Colonic mucosa (tissue), 4 donors: ENCODE measurements at regions of chr13 and their contacts with region 1.

Region 1: DNA sequence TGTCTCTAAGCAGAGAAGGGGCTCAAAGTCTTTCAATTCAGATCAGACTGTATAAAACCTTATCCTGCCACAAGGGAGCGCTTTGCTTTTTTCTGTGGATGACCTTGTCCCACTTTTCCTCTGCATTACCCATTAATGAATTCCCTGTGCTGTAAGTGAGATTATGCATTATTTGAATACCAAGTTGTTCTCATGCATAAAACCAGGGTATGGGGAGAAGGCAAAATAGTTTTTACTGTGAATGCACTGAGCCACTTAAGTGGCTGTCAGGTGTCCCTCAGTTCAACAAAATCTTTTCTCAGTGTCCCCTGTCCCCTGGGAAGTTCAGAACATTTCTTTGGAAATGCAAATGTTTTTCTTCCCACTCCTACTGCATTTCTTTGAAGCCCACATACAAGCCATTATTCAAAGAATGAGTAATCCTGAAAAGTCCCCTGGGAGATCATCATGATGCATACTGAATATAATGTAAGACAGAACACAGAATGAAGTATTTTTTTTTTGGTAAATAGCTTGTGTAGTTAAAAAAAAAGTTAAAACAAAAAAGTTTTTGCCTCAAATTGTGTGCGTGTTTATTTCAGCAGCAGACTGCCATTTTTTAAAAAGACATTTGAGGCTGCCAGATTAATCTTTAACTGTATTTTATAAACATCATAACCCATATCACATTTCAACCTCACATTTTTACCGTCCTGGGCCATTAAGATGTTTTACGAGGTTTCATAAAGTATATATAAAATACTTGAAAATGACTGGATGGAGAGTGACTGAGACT is 506.7 kb upstream of the PCDH9 start:
- DNase-seq: peak; percentile 21
- H3K4me3 ChIP-seq: no peak overlapping the region
- H3K27ac ChIP-seq: no peak overlapping the region
- H3K4me1 ChIP-seq: no peaks in the 10 kb centered on the region
- H3K27me3 ChIP-seq: no peaks in the 10 kb centered on the region
- CTCF ChIP-seq: peak; percentile 16

Region 2: GRCh38 chr13:68234274-68234673 is 497.4 kb after region 1 on chr13:
- intact Hi-C with region 1: loop called (anchors 10 kb)
- DNase-seq: no peak
- H3K4me3 ChIP-seq: no peak overlapping the region
- H3K27ac ChIP-seq: no peak overlapping the region
- H3K4me1 ChIP-seq: no peaks in the 10 kb centered on the region
- H3K27me3 ChIP-seq: no peaks in the 10 kb centered on the region
- CTCF ChIP-seq: no peak

Region 3: DNA sequence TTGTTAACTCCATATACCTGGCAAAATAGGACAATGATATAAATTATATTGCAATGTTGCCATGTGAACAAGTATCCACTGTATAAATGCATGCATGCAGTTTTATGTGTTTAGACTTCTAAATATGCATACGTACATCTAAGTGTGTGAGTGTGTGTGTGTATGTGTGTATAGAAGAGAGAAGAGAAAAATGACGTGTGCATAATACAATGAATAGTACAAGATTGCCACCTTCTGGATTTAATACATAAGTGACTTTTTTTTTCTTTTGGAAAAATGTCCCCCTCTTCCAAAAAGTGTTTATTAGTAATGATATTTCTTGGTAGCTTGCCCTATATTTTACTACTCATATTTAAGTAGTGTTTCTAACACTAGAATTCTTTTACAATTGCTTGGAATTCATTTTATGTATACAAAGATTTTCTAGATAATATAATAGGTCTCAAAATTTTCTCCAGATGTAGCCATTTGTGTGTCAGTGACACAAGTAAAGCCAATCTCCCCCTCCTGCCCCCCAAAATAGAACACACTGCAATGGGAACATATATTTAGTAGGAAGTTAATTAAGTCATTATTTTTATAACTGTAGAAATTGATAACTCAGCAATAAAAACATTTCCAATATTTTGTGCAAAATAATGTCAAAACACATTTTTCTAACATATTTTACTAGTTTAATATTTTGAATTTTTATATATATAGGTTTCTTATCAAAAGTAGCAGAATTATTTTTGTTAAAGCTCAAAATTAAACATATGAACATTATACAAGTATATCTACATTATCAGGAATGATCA is 1587.5 kb after region 1 on chr13:
- intact Hi-C with region 1: loop called (anchors 10 kb)
- DNase-seq: no peak
- H3K4me3 ChIP-seq: no peak overlapping the region
- H3K27ac ChIP-seq: no peak overlapping the region
- H3K4me1 ChIP-seq: no peaks in the 10 kb centered on the region
- H3K27me3 ChIP-seq: no peaks in the 10 kb centered on the region
- CTCF ChIP-seq: no peak